ENCODE measurements at regions of chr9 and their contacts with region 1.

Region 1: DNA sequence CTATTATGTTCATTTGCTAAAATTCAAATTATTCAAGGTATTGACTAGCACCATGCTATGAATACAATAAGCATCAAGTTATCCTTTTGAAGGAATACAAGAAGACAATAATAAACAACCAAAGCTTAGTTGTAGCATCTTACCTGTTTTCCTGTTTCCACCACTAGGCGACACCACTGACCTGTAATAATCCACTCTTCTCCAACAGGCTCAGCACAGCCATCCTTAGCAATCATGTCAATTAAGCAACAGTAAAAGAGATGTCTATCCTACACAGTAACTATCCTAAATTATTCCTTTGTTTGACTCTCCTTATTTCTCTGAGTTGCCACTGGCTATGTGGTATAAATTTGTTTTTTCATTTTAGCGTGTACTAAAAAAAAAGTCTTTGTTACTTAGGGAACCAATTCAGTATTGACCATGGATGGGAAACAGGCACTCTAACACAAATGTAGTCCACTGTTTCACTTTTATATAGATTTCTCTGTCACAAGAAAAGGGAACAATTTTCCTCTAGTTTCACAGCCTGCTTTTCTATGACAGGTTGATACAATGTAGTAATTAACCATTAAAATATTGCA is 46.2 kb downstream of the PCA3 start:
- DNase-seq: peak in 1 of 2 donors; percentile 41
- H3K4me3 ChIP-seq: no peak overlapping the region
- CTCF ChIP-seq: no peak
- POLR2A ChIP-seq: no peak

Region 2: DNA sequence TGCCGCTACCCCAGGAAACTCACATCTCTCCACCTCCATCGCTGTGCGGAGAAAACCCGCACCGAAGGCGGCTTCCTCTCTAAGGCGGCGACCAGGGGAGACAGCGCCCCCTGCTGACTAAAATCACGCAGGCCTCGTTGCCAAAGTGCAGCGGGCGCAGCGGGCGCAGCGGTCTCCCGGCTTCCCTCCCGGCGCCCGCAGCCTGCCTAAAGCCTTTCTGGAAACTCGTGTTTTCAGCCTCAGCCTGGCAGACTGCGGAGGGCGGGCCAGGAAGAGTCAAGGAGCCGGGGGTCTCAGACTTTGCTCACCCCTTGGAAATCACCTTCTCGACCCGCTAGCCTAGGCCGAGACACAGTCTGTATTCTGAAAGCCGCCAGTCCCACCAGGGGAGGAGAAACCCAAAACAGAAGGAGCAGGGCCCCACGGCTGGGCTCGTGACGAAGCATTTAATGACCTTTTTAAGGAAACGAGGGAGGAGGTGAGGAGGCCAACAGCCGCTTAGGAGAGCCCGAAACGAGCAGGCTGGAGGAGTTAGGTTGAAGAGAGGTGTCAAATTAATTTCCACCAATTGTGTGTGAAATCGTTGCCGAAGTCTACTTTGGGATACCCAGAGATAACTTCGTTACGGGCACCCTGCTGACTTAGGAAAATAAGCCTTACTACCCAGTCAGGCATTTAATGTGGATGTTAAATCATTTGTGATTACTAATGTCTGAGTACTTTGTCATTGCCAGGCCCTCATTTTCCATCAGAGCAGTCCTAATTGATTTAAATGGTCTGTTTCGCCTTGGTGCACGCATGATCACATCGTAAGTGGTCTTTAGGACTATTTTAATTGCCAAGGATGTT is 201.7 kb after region 1 on chr9:
- intact Hi-C with region 1: loop called (anchors 5 kb)
- DNase-seq: peak in 1 of 2 donors; percentile 92
- H3K4me3 ChIP-seq: no peak overlapping the region
- CTCF ChIP-seq: no peak
- POLR2A ChIP-seq: no peak

Region 3: DNA sequence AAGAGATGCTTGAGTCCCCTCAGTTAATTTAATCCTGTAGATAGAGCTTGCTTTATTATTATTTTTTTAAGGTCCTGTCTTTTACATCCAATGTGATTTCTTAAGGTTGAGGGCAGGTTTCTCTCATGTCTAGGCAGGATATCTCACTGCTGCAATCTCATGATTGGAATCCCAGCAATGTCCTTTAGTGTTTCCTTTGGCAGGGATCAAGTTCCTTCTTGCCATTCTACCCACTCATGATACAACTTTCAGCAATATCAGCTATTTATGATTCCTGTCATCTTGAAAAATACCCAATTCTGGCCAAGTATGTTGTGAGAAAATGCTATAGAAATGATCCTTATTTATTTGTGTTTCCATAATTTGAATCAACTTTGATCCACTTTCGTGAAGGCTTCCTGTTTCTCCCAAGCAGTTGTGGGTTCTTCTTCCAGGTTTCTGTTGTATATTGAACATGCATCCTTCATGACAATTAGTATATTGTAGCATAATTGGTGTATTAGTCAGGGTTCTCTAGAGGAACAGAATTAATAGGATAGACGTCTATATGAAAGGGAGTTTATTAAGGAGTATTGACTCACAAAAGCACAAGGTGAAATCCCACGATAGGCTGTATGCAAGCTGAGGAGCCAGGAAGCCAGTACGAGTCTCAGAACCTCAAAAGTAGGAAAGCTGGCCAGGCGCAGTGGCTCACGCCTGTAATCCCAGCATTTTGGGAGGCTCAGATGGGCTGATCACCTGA is 348.5 kb after region 1 on chr9:
- intact Hi-C with region 1: loop called (anchors 10 kb)
- DNase-seq: no peak
- H3K4me3 ChIP-seq: no peak overlapping the region
- CTCF ChIP-seq: no peak
- POLR2A ChIP-seq: no peak

Measured in lower leg skin (tissue), 4 donors.